ENCODE measurements at regions of chr6 and their contacts with region 1.

Region 1: DNA sequence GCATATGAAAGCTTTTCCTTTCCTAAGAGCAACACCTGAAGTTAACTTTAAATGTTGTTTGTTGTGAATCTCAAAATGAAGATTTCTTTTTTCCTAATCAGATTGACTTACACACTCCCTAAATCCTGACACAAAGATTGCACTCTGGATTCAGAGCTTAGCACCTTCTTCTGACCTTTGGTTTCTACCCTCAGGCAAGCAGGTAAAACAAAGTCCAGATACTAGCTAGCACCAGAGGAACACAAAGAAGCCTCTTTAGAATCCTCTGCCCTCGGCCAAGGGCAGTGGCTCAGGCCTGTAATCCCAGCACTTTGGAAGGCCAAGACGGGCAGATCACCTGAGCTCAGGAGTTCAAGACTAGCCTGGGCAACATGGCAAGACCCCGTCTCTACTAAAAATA is 14.5 kb downstream of the SERAC1 start:
- DNase-seq: no peak
- ATAC-seq: no peak
- H3K4me3 ChIP-seq: no peak overlapping the region
- H3K27ac ChIP-seq: no peak overlapping the region
- H3K4me1 ChIP-seq: no peaks in the 10 kb centered on the region; the same call in 1 of the 2 replicates
- H3K27me3 ChIP-seq: no peaks in the 10 kb centered on the region
- CTCF ChIP-seq: no peak

Region 2: DNA sequence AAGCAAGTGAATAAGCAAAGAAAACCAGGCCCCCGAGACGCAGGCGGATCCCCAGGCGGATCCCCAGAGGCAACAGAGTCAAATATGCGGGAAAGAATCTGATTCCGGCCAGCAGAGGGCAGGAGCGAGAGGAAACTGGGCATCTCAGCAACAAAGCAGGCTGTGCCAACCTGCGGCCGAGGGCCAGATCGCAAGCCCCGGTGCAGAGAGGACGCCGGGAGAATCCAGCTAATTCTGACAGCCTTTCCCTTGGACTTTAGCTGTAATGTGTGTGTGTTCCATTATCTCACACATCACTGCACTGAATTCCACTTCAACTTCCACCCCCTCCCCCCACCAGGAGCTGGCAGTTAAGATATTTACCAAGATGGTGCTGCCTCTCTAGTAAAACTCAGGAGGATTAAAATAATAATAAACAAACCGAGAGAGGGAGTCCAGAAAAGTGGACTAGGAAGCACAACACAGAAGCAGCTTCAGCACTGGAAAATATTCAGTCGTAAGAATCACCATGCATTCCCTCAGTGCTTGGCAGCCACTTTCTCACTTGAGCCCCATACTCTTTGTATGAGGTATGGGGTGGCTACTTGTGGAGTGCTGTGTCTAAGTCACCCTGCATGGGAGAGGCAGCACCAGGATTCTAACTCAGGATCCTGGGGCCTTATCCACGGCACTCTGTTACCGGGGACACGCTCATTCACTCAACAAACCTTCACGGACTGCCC is 396.7 kb before region 1 on chr6:
- CTCF ChIA-PET with region 1: interaction called, 11 read pairs
- POLR2A ChIA-PET with region 1: no interaction called
- in situ Hi-C with region 1: no loop called
- intact Hi-C with region 1: no loop called
- DNase-seq: peak; percentile 72
- ATAC-seq: peak; percentile 81
- H3K4me3 ChIP-seq: peak overlapping the region in 1 of 2 experiments; percentile 23; a peak in 2 of 4 replicates
- H3K27ac ChIP-seq: peak overlapping the region; percentile 65
- H3K4me1 ChIP-seq: peaks cover 47% of the 10 kb centered on the region
- H3K27me3 ChIP-seq: no peaks in the 10 kb centered on the region
- CTCF ChIP-seq: peak; percentile 95